AG04449 (cell line): ENCODE measurements at regions of chr2 and their contacts with region 1.

Region 1: DNA sequence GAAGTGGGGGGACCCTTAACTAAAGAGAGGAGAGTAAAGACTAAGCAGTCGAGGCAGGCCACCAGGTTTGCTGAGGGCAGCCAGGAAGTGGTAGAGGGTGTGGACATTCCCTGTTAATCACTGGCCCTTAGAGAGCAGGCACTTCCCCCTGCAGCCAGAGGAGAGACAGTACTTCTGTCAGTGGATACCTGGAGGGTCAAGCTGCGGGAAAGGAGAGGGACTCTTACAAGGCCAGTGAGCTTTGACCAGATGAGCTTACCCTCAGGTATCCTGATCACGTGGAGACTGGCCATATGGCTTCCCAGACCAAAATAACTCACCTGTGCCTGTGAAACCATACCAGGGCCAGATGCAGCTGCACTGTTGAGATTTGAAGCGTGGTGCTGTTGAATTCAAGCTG is 28.6 kb downstream of the ITGA6 start:
- DNase-seq: no peak
- H3K4me3 ChIP-seq: no peak overlapping the region
- CTCF ChIP-seq: no peak

Region 2: GRCh38 chr2:172342078-172342477 is 113.9 kb before region 1 on chr2:
- CTCF ChIA-PET with region 1: no interaction called
- POLR2A ChIA-PET with region 1: no interaction called
- DNase-seq: no peak
- H3K4me3 ChIP-seq: no peak overlapping the region
- CTCF ChIP-seq: no peak

Region 3: GRCh38 chr2:172442072-172442895 is 13.7 kb before region 1 on chr2:
- CTCF ChIA-PET with region 1: interaction called, 226 read pairs
- POLR2A ChIA-PET with region 1: no interaction called
- DNase-seq: peak; percentile 41
- H3K4me3 ChIP-seq: no peak overlapping the region
- CTCF ChIP-seq: no peak